ENCODE measurements at regions of chr2 and their contacts with region 1.

Region 1: DNA sequence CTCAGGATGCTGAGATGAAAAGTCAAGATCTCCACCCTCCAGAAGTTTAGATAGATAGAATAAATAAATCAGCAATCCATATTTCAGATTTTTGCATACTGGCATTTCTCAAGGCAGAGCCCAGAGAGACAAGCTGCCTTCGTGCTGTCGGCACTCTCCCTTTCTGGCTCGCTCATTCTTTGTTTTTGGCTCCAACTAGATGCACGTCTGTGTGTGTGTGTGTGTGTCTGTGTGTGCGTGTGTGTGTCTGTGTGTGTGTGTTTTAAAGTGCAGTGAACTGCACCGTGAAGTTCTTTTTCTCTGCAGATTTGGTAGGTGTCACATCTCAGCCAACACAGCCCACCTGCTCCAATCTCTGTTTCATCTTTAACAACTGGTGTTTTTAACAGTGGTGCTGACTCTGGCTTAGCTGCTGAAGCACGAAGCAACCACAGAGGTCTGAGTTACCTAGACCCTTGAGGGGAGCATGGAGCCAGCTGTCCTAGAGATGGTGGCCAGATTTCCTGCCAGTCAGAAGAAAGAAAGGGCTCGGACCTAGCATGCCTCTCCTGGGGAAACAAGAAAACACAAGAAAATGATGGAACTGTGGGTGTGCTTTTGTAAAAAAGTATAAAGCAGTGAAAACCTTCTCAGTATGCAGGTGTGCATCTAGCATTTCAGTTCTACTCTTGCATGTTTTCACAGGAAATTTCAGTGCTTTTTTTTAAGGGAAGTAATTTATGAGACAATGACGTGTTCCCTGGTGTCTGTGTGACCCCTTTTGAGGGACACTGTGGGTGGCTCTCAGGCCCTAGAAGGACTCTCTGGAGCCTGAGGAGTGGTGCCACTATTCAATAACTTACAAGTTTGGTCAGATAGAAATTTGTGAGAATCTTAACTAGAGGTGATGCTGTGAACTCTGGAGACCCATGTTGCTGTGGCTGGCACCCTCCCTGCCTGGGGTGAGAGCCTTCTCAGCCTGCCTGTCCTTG is 364.3 kb downstream of the RNF144A start:
- DNase-seq: no peak
- H3K4me3 ChIP-seq: no peak overlapping the region
- H3K27ac ChIP-seq: no peak overlapping the region
- H3K4me1 ChIP-seq: no peaks in the 10 kb centered on the region
- H3K27me3 ChIP-seq: no peaks in the 10 kb centered on the region
- CTCF ChIP-seq: no peak
- POLR2A ChIP-seq: no peak

Region 2: GRCh38 chr2:6993229-6993640 is 288.3 kb before region 1 on chr2:
- intact Hi-C with region 1: no loop called
- DNase-seq: no peak
- H3K4me3 ChIP-seq: no peak overlapping the region
- H3K27ac ChIP-seq: peak overlapping the region; percentile 31
- H3K4me1 ChIP-seq: peaks cover 17% of the 10 kb centered on the region
- H3K27me3 ChIP-seq: no peaks in the 10 kb centered on the region
- CTCF ChIP-seq: no peak
- POLR2A ChIP-seq: no peak

Region 3: GRCh38 chr2:7097348-7097895 is 184.1 kb before region 1 on chr2:
- intact Hi-C with region 1: no loop called
- DNase-seq: no peak
- H3K4me3 ChIP-seq: peak overlapping the region in 1 of 2 donors; percentile 3
- H3K27ac ChIP-seq: no peak overlapping the region
- H3K4me1 ChIP-seq: peaks cover 11% of the 10 kb centered on the region
- H3K27me3 ChIP-seq: no peaks in the 10 kb centered on the region
- CTCF ChIP-seq: peak; percentile 79 to 99 (median 84)
- POLR2A ChIP-seq: no peak

Region 4: DNA sequence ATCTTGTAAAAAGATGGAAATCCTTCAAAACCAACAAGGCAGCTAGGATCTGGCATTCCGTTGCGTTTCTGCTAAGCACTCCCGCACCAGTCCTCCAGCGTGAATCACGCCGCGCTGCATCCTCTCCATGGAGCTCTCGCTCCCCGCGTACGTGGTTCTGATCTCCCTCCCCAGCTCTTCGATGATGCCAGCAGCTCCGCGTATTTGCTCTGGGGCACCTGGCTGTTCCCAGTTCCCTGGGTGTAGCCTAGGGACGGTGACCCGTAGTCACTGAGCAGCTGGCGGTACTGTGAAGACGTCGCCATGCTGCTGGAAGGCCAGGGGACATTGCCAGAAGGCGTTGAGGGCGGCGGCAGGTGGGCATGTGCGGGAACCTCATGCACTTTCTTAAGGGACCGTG is 43.2 kb after region 1 on chr2:
- intact Hi-C with region 1: loop called (anchors 2 kb)
- DNase-seq: no peak
- H3K4me3 ChIP-seq: no peak overlapping the region
- H3K27ac ChIP-seq: no peak overlapping the region
- H3K4me1 ChIP-seq: no peaks in the 10 kb centered on the region
- H3K27me3 ChIP-seq: no peaks in the 10 kb centered on the region
- CTCF ChIP-seq: no peak
- POLR2A ChIP-seq: no peak

Region 5: DNA sequence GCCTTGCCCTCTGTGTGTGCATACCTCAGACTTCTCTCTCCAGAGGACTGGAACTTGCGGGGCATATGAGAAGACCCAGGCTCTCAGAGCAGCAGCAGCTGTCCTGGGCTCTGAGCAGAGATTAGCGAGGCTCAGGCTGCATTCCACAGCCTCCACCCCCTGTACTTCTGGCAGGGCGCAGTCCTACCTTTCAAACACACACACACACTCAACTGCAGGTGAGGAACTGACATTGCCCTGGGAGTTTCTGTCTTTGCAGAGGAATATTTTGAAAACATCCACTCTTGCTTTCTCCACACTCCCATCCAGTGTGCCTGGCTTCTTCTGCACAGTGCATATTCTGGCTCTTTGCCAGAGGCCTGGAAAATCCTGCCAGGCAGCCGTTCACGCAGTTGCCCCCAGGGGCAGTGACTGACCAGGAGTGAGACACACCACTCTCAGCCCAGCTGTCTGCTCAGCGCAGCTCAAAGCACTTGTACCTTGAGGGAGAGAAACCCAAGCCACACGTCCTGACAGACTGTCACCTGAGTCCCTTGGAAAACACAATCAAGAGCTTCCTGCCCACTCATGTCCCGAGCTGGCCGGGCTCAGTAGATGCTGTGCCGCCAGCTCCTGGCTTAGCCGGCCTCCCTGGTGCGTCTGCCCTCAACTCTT is 96.5 kb after region 1 on chr2:
- intact Hi-C with region 1: no loop called
- DNase-seq: no peak
- H3K4me3 ChIP-seq: no peak overlapping the region
- H3K27ac ChIP-seq: no peak overlapping the region
- H3K4me1 ChIP-seq: no peaks in the 10 kb centered on the region
- H3K27me3 ChIP-seq: no peaks in the 10 kb centered on the region
- CTCF ChIP-seq: no peak
- POLR2A ChIP-seq: no peak